Left ventricle myocardium superior (tissue), 1 donor: ENCODE measurements at regions of chr1 and their contacts with region 1.

Region 1: DNA sequence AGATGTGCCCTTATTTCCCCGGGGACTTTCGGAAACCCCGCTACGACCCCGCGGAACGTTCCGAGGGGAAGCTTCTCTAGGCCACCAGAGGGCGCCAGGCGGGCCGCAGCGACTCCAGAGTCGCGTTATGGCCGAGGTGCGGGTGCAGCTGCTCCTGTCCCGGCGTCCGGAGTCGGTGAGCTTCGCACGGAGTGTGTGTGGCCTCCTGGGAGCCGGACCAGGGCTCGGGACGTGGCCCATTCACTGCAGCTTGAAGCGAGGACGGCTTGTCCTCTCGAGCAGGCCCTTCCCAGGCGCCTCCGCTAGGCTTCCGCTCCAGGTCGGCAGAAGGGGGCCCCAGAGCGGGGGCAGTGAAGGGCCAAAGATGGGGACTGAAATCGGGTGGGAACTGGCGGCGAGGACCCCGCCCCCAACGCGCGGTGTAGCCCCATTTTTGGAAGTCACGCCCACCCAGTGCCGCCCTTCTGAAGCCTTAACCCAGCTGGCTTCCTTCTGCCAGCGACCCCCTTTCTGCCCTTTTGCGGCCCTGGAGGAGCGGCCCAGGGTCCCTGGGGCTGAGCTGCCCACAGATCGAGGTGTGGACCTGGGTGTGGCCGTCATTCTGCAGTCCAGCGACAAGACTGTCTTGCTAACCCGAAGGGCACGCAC is at the start of gene NUDT17:
- DNase-seq: peak; percentile 90
- ATAC-seq: peak; percentile 89
- total RNA-seq, gene NUDT17: 3.4 TPM

Region 2: GRCh38 chr1:145740266-145740665 is 105.4 kb before region 1 on chr1:
- intact Hi-C with region 1: no loop called
- DNase-seq: no peak
- ATAC-seq: no peak

Region 3: GRCh38 chr1:145918144-145918992 is 72.7 kb after region 1 on chr1 and contains the start of gene PEX11B:
- intact Hi-C with region 1: loop called (anchors 10 kb)
- DNase-seq: peak; percentile 91
- ATAC-seq: peak; percentile 94
- total RNA-seq, gene PEX11B: 23.8 TPM

Region 4: DNA sequence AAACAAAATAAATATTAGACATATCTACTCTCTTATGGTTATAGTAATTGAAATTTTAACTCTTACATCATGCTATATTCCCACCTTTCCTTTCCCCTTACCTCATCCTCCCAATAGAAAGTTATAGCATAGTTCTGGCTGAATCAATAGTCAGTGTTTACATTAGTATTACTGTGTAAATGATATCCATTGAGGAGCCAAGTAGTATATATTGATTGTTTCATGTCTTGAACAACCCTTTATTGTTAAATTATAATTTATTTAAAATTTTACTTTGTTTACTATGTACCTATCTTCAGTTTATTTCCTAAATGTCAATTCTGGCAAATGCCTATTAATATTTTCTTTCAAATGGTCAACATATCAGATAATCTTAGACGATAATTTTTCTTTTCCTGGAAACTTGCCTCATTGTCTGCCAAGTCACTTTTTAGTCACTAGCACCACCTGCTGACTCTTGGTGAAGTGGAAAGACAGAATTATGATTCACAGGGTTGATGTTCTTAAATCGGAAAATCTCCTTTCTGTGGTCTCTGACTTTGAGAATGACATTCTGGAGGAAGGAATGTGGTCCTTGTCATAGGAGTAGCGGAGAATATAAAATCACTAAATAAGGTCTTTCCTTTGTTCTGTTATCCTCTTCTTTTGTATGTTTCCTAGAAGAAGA is 167.2 kb after region 1 on chr1:
- intact Hi-C with region 1: loop called (anchors 5 kb)
- DNase-seq: no peak
- ATAC-seq: peak; percentile 29

Region 5: GRCh38 chr1:146032631-146033219 is 187.1 kb after region 1 on chr1:
- intact Hi-C with region 1: no loop called
- DNase-seq: no peak
- ATAC-seq: no peak